ENCODE measurements at regions of chr9 and their contacts with region 1.

Region 1: DNA sequence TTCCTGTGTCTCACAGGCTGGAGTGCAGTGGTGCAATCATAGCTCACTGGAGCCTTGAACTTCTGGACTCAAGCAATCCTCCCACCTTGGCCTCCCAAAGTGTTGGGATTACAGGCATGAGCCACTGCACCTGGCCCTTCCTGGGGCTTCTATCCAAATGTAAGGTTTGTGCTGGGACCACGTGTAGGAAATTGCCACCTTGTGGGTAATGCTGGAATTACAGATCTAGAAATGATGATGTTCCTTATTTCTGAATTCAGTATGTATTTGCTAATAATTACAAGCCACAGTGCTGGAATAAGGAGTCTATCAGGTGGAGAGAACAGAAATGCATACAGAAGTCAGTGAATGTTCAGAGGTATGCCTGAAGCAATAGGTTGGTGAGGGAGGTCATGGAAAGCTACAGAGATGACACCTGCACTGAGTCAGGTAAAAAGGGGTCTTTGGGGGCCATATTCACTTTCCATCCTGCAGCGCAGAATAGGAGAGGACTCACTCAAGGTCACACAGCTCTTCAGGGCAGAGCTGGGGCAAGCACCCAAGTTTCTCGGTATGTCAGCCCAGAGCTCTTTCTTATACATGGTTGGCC is 8.8 kb upstream of the IGFBPL1 start:
- DNase-seq: peak; percentile 34 to 60
- ATAC-seq: peak; percentile 62 to 66; a peak in 3 of 6 replicates
- H3K4me3 ChIP-seq: no peak overlapping the region
- H3K27ac ChIP-seq: no peak overlapping the region
- H3K4me1 ChIP-seq: peaks cover 21% of the 10 kb centered on the region
- CTCF ChIP-seq: peak; percentile 59
- EP300 ChIP-seq: no peak
- POLR2A ChIP-seq: no peak
- RAD21 ChIP-seq: peak; percentile 54 to 55

Region 2: DNA sequence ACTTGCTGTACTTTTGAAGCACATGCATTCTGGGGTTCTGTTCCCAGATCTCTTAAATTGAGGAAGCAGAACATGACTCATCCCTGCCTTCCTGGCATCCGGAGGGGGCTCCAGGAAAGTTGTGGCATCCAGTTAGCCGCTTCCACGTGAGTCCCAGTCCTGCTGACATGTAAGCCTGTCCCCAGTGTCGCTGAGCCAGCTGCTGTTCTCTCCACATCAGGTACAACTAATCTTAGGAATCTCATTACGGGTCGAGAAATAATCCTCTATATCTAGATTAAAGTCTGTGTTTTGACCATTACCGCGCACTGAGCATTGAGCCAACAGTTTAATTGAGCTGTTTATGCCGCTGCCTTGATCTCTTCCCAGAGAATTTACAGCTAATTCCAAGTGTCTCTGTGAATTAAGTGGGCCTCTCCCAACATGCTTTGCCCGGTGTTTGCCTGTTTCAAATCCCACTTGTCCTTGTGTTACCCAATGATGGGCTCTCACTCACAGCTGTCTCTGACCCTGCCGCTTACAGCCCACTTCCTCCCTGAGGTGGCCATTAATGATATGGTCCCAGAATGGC is 353.5 kb before region 1 on chr9:
- CTCF ChIA-PET with region 1: no interaction called
- POLR2A ChIA-PET with region 1: no interaction called
- DNase-seq: no peak
- ATAC-seq: no peak
- H3K4me3 ChIP-seq: no peak overlapping the region
- H3K27ac ChIP-seq: no peak overlapping the region
- H3K4me1 ChIP-seq: no peaks in the 10 kb centered on the region
- CTCF ChIP-seq: no peak
- EP300 ChIP-seq: no peak
- POLR2A ChIP-seq: no peak
- RAD21 ChIP-seq: no peak

Region 3: DNA sequence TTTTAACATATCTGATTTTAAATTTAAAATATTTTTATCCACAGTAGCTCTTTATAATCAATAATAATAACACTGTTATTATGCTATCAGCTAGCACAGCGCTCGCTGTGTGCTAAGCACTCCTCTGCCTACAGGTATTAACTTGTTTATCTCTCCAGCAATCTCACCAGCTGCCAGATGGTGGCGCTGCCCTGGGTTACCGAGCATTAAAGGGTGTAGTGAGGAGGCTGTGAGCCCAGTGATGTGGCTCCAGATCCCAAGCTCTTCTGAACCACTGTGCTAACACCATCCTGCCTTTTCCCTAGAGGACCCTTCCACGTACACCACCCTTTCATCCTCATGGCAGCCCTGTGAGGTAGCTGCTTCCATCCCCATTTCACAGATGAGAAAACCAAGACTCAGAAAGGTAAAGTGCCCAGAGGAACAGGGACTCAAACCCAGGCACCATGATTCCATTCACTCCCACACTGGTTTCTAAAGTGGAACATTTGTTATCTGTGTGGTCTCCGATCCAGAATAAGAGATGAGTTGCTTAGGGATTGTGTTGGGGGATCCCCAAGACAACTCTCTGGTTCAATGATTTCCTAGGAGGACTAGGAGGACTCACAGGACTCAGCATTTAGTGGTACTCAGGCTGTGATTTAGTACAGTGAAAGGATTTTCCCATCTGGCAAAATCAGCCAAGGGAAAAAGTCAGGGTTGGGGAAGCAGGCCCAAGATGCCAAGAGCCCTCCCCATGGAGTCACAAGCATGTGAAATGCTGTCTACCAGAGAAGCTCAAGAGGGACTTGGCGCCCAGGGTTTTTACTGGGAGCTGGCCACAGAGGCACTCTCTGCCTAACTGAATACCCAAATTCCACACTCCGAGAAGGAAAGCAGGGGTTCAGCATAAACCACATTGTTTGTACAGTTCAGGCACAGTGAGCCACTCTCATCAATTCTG is 15.7 kb before region 1 on chr9:
- CTCF ChIA-PET with region 1: interaction called, 49 read pairs
- POLR2A ChIA-PET with region 1: no interaction called
- DNase-seq: peak; percentile 38 to 48
- ATAC-seq: peak; percentile 50 to 87; a peak in 4 of 6 replicates
- H3K4me3 ChIP-seq: no peak overlapping the region
- H3K27ac ChIP-seq: no peak overlapping the region
- H3K4me1 ChIP-seq: no peaks in the 10 kb centered on the region
- CTCF ChIP-seq: peak; percentile 59
- EP300 ChIP-seq: no peak
- POLR2A ChIP-seq: no peak
- RAD21 ChIP-seq: peak; percentile 15 to 42; a peak in 2 of 5 replicates

Region 4: GRCh38 chr9:38443181-38443580 is 10.2 kb after region 1 on chr9:
- CTCF ChIA-PET with region 1: interaction called, 21 read pairs
- POLR2A ChIA-PET with region 1: no interaction called
- DNase-seq: peak; percentile 48 to 76
- ATAC-seq: peak; percentile 81 to 88
- H3K4me3 ChIP-seq: no peak overlapping the region
- H3K27ac ChIP-seq: peak overlapping the region; percentile 65 to 72
- H3K4me1 ChIP-seq: peaks cover 22% of the 10 kb centered on the region
- CTCF ChIP-seq: no peak
- EP300 ChIP-seq: no peak
- POLR2A ChIP-seq: no peak
- RAD21 ChIP-seq: no peak

Measured in A549 (cell line).